PC-3 (cell line): ENCODE measurements at regions of chr4 and their contacts with region 1.

Region 1: GRCh38 chr4:168631241-168632162 is 134.7 kb downstream of the PALLD start:
- DNase-seq: peak; percentile 69
- ATAC-seq: peak; percentile 76
- H3K4me3 ChIP-seq: peak overlapping the region; percentile 93
- H3K27ac ChIP-seq: peak overlapping the region; percentile 95
- H3K4me1 ChIP-seq: peaks cover 48% of the 10 kb centered on the region
- H3K27me3 ChIP-seq: no peaks in the 10 kb centered on the region
- CTCF ChIP-seq: peak; percentile 42; the same call in 1 of the 2 replicates

Region 2: GRCh38 chr4:168183717-168184608 is 447.5 kb before region 1 on chr4:
- CTCF ChIA-PET with region 1: no interaction called
- POLR2A ChIA-PET with region 1: no interaction called
- intact Hi-C with region 1: loop called (anchors 5 kb)
- DNase-seq: peak; percentile 55
- ATAC-seq: peak; percentile 64
- H3K4me3 ChIP-seq: no peak overlapping the region
- H3K27ac ChIP-seq: no peak overlapping the region
- H3K4me1 ChIP-seq: peaks cover 6% of the 10 kb centered on the region
- H3K27me3 ChIP-seq: no peaks in the 10 kb centered on the region
- CTCF ChIP-seq: peak; percentile 78

Region 3: DNA sequence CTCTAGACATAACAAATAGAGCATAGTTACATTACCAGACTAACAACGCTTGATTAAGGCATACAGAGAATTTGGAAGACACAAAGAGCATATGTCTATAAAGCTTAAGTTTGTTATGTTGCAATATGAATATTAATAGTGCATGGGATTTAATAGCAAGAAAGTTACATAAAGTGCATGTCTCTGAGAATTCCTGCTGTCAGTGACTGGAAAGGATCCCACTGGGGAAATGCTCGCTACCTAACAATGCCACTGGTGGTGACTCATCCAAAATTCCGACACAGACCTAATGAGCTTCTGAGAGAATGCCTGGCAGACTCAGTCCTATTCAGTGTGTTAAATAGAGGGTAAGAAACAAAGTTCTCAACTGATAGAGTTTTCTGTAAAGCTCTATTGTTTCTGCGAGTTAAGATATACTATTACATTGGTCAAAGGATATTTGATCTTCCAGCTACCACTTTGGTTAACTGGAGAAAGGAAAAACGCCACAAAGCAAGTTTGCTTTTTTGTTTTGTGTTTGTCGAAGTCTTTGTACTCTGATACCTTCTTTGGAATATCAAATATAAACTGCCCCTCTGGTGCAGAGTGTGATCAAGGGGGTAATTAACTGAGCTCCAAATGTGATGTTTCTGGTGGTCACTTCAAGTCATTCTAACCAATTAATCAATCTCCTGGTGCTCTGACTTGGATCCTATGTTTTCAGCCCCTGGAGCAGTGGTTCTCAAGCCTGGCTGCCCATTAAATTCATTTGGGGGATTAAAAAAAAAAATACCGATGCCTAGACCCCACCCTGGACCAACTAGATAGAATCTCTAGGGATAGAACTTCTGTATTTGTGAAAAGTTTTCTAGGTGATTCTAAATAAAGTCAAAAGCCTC is 26.8 kb before region 1 on chr4:
- CTCF ChIA-PET with region 1: no interaction called
- POLR2A ChIA-PET with region 1: no interaction called
- intact Hi-C with region 1: loop called (anchors 2 kb)
- DNase-seq: peak; percentile 87
- ATAC-seq: peak; percentile 92
- H3K4me3 ChIP-seq: no peak overlapping the region
- H3K27ac ChIP-seq: peak overlapping the region; percentile 84
- H3K4me1 ChIP-seq: peaks cover 48% of the 10 kb centered on the region
- H3K27me3 ChIP-seq: no peaks in the 10 kb centered on the region
- CTCF ChIP-seq: no peak

Region 4: GRCh38 chr4:168694648-168695047 is 63.1 kb after region 1 on chr4:
- CTCF ChIA-PET with region 1: no interaction called
- POLR2A ChIA-PET with region 1: no interaction called
- intact Hi-C with region 1: loop called (anchors 10 kb)
- DNase-seq: peak; percentile 58
- ATAC-seq: no peak
- H3K4me3 ChIP-seq: no peak overlapping the region
- H3K27ac ChIP-seq: peak overlapping the region; percentile 33
- H3K4me1 ChIP-seq: peaks cover 34% of the 10 kb centered on the region
- H3K27me3 ChIP-seq: no peaks in the 10 kb centered on the region
- CTCF ChIP-seq: no peak

Region 5: DNA sequence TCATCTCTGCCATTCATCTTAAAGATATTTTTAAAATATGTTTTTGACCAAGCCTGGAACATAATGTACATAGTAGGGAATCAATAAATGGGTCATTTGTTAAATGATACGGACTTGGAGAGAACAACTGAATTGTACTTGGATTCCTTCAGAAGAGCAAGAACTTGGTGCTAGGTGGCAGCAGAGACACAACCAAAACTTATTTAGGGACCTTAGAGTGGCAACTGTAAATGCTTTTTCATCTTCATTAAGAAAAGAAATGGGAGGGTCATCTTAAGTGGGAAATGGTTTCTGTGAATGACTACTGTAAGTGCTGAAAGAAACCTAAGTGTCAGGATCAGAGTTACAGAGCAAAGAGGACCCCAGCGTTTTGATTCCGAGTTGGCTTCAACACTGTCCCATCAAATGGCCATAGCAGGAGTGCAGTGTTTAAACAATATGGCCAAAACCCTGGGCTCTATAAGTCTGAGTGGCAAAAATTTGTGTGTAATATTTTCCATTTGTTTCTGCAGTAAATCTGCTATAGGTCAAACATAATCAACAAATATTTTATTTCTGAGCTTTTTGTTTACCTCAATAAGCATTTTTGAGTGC is 78.9 kb after region 1 on chr4:
- CTCF ChIA-PET with region 1: no interaction called
- POLR2A ChIA-PET with region 1: no interaction called
- intact Hi-C with region 1: loop called (anchors 2 kb)
- DNase-seq: peak; percentile 48
- ATAC-seq: no peak
- H3K4me3 ChIP-seq: no peak overlapping the region
- H3K27ac ChIP-seq: no peak overlapping the region
- H3K4me1 ChIP-seq: peaks cover 16% of the 10 kb centered on the region
- H3K27me3 ChIP-seq: no peaks in the 10 kb centered on the region
- CTCF ChIP-seq: peak; percentile 61

Region 6: GRCh38 chr4:168923526-168924194 is 292.2 kb after region 1 on chr4:
- CTCF ChIA-PET with region 1: no interaction called
- POLR2A ChIA-PET with region 1: no interaction called
- intact Hi-C with region 1: loop called (anchors 5 kb)
- DNase-seq: peak; percentile 74
- ATAC-seq: peak; percentile 78
- H3K4me3 ChIP-seq: no peak overlapping the region
- H3K27ac ChIP-seq: no peak overlapping the region
- H3K4me1 ChIP-seq: no peaks in the 10 kb centered on the region
- H3K27me3 ChIP-seq: no peaks in the 10 kb centered on the region
- CTCF ChIP-seq: peak; percentile 80